Mammary epithelial cell (primary cell): ENCODE measurements at regions of chr1 and their contacts with region 1.

Region 1: DNA sequence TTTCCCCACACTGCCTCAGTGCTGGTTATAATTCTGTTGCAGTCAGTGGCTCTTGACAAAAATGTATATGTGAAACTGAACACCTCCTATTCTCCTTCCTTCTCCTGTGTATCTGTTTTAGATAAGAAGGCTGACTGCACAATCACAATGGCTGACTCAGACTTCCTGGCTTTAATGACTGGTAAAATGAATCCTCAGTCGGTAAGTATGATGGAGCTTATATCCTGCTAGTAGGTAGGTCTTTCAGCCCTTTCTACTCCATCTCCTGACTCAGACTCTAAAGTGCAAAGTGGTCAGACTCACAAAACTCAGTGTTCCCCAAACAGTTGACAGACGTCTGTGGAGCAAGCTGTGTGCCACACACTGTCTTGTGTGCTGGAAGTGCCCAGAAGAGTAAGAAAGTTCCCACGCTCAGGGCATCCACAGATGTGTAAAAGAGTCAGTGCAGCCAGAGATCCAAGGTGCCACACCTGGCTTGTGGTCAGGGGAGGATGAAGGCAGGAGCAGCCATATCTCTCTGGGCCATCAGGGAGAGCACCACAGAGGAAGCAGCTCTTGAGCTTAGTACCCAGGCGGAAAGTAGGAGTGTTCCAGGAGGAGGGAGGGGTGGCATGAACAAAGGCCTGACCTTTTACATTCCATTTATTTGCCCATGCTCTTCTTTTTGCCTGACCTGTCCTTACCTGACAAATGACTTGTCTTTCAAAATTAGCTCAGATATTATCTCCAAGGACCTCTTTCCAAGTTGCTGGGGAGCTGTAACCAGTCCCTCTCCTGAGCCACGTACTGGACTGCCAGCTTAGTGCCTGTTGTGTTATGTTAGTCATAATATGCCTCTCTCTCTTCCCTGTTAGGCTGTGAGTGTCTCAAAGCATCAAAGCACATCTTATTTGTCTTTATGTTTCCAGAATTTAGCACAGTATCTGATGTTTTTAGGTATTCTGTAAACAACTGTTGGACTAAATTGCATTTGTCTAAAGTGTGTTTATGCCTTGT is 14.0 kb upstream of the PODN start:
- DNase-seq: peak; percentile 33
- H3K4me3 ChIP-seq: no peak overlapping the region
- H3K27ac ChIP-seq: no peak overlapping the region
- H3K4me1 ChIP-seq: peaks cover 10% of the 10 kb centered on the region
- H3K27me3 ChIP-seq: no peaks in the 10 kb centered on the region
- CTCF ChIP-seq: no peak

Region 2: GRCh38 chr1:53084589-53084971 is 36.5 kb after region 1 on chr1:
- CTCF ChIA-PET with region 1: no interaction called
- dilution Hi-C with region 1: loop called (anchors 5 kb)
- in situ Hi-C with region 1: no loop called
- intact Hi-C with region 1: no loop called
- DNase-seq: no peak
- H3K4me3 ChIP-seq: no peak overlapping the region
- H3K27ac ChIP-seq: no peak overlapping the region
- H3K4me1 ChIP-seq: no peaks in the 10 kb centered on the region
- H3K27me3 ChIP-seq: no peaks in the 10 kb centered on the region
- CTCF ChIP-seq: no peak